CD4-positive, alpha-beta memory T cell (primary cell): ENCODE measurements at regions of chr9 and their contacts with region 1.

Region 1: DNA sequence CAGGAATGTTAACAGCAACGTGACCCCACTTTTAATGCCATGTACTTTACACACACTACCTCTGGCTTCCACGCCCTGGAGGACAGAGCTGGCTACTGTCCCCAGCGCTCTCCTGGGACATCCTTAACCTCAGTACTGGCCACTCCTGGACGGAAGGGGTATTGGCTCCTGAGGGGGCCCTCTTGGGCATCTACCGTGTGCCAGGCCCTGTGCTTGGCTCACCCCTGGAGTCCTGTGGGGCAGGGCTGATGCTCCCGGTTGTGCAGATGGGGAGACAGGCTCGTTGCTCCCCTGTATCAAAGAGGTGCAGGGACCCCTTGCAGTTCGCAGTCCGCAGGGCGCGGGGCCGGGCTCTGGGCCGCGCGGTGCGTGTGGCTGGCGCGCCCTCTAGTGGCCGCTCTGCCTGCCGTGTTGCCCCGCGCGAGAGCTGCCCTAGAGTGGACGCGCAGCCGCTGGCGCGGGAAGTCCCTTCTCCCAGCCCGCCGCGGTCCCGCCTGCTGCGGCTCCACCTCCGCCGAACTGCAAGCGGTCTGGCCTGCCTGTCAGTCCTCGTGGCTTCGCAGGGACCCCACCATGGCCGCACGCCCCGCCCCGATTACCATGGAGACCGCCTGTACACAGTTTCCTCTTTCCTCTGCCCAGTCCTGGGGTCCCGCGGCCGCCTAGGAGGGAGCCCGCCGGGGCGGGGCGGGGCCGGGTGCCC is at the start of gene WDR38:
- DNase-seq: peak; percentile 78 to 91 (median 80)
- H3K4me3 ChIP-seq: peak within 1 kb of the TSS; percentile 3 to 58
- H3K4me3 Mint-ChIP-seq: peak within 1 kb of the TSS; percentile 55 to 79 (median 72)
- H3K27ac ChIP-seq: peak within 1 kb of the TSS; percentile 69
- H3K27ac Mint-ChIP-seq: peak within 1 kb of the TSS; percentile 57 to 95 (median 83)
- H3K4me1 ChIP-seq: peaks cover 11% of the 10 kb centered on the region
- H3K4me1 Mint-ChIP-seq: peaks cover 5 to 19% (median 6%) of the 10 kb centered on the region in 4 donors
- H3K27me3 ChIP-seq: no peaks in the 10 kb centered on the region
- H3K27me3 Mint-ChIP-seq: peaks cover 0 to 1% of the 10 kb centered on the region in 2 donors
- total RNA-seq, gene WDR38: not detected

Region 2: DNA sequence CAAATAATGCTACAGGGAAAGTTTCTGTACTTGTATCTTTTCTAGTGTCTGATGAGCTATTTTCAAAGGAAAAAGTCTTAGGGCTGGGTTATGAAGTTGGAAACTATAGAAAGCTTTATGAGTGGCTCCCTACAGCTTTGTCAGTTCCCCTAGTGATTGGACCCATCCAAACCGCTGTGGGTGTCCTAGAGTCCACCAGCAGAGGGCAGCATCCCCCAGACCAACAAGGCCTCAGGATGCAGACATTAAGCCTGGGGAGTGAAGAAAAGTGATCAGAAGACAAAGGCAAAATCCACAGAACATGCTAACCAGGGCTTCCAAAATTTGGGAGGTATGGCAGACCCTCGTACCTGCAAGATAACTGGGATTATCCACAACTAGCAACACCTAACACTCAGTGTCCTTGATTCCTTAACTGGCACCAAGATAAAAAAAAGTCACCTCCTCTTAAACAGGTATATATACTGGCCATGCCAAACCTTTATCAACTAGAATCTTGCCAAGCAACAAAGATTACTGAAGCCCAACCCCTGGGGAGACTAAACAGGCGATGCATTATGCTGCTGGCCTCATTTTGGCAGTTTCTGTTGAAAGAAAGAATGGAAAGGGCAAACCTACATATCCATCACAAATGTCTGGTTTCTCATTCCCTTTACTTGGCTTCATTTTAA is 235.4 kb before region 1 on chr9:
- CTCF ChIA-PET with region 1: no interaction called
- POLR2A ChIA-PET with region 1: no interaction called
- intact Hi-C with region 1: loop called (anchors 2 kb)
- DNase-seq: peak; percentile 34 to 52 (median 43)
- H3K4me3 ChIP-seq: no peak overlapping the region
- H3K4me3 Mint-ChIP-seq: no peak overlapping the region
- H3K27ac ChIP-seq: no peak overlapping the region
- H3K27ac Mint-ChIP-seq: no peak overlapping the region
- H3K4me1 ChIP-seq: no peaks in the 10 kb centered on the region
- H3K4me1 Mint-ChIP-seq: no peaks in the 10 kb centered on the region
- H3K27me3 ChIP-seq: no peaks in the 10 kb centered on the region
- H3K27me3 Mint-ChIP-seq: peaks cover 4 to 13% of the 10 kb centered on the region in 2 donors

Region 3: GRCh38 chr9:124708633-124709291 is 144.2 kb before region 1 on chr9:
- CTCF ChIA-PET with region 1: interaction called, 3 read pairs
- POLR2A ChIA-PET with region 1: no interaction called
- intact Hi-C with region 1: loop called (anchors 5 kb)
- DNase-seq: no peak
- H3K4me3 ChIP-seq: no peak overlapping the region
- H3K4me3 Mint-ChIP-seq: no peak overlapping the region
- H3K27ac ChIP-seq: no peak overlapping the region
- H3K27ac Mint-ChIP-seq: no peak overlapping the region
- H3K4me1 ChIP-seq: no peaks in the 10 kb centered on the region
- H3K4me1 Mint-ChIP-seq: peaks cover 0 to 2% (median 0%) of the 10 kb centered on the region in 4 donors
- H3K27me3 ChIP-seq: peaks cover 4% of the 10 kb centered on the region
- H3K27me3 Mint-ChIP-seq: peaks cover 14 to 18% of the 10 kb centered on the region in 2 donors

Region 4: GRCh38 chr9:124839612-124840299 is 13.2 kb before region 1 on chr9:
- CTCF ChIA-PET with region 1: interaction called, 14 read pairs
- POLR2A ChIA-PET with region 1: no interaction called
- intact Hi-C with region 1: no loop called
- DNase-seq: no peak
- H3K4me3 ChIP-seq: no peak overlapping the region
- H3K4me3 Mint-ChIP-seq: peak overlapping the region in 1 of 8 donors; percentile 1
- H3K27ac ChIP-seq: no peak overlapping the region
- H3K27ac Mint-ChIP-seq: no peak overlapping the region
- H3K4me1 ChIP-seq: no peaks in the 10 kb centered on the region
- H3K4me1 Mint-ChIP-seq: peaks cover 0 to 8% (median 0%) of the 10 kb centered on the region in 4 donors
- H3K27me3 ChIP-seq: peaks cover 4% of the 10 kb centered on the region
- H3K27me3 Mint-ChIP-seq: peaks cover 15 to 16% of the 10 kb centered on the region in 2 donors

Region 5: DNA sequence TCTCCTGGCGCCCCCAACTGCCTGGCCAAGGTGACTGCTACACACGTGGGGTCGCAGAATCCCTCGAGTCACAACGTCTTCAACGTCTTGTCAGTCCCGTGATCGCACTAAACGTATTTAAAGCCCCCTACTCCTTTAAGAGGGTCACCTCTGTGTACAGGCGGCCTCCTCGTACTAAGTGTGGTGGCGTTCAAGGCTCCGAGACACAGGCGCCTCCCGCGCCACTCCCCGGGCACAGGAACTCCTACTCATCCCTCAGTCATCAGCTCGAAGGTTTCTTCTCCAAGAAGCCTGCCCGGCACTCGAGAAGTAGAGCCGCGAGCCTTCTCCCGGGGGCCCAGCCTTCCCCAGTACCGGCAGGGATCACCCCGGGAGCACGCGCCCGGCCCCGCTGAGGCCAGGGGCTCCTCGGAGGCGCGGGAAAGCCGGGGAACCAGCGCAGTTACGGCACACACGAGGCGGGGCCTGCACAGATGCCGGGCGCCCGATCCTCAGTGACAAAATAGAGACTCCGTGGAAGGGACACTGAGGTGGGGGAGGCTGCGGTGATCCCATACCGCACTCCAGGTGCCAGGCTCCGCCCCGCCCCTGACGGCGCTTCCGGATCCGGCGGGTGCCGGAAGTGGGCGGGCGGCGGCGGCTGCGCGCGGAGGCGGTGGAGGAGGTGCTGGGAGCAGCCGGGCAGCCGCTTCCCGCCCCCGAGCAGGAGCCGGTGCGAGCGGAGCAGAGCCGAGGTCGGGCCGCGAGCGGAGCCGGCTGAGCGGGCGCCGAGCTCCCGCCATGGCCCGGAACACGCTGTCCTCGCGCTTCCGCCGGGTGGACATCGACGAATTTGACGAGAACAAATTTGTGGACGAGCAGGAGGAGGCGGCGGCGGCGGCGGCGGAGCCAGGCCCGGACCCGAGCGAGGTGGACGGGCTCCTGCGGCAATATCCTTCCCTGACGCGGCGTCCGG is 15.8 kb after region 1 on chr9:
- CTCF ChIA-PET with region 1: interaction called, 56 read pairs
- POLR2A ChIA-PET with region 1: interaction called, 74 read pairs
- intact Hi-C with region 1: no loop called
- DNase-seq: peak; percentile 90 to 94 (median 92)
- H3K4me3 ChIP-seq: peak overlapping the region; percentile 58 to 85
- H3K4me3 Mint-ChIP-seq: peak overlapping the region; percentile 90 to 96 (median 93)
- H3K27ac ChIP-seq: peak overlapping the region; percentile 91
- H3K27ac Mint-ChIP-seq: peak overlapping the region; percentile 94 to 98 (median 95)
- H3K4me1 ChIP-seq: peaks cover 47% of the 10 kb centered on the region
- H3K4me1 Mint-ChIP-seq: peaks cover 29 to 64% (median 43%) of the 10 kb centered on the region in 4 donors
- H3K27me3 ChIP-seq: no peaks in the 10 kb centered on the region
- H3K27me3 Mint-ChIP-seq: no peaks in the 10 kb centered on the region

Region 6: GRCh38 chr9:124879226-124879625 is 26.2 kb after region 1 on chr9:
- CTCF ChIA-PET with region 1: interaction called, 56 read pairs
- POLR2A ChIA-PET with region 1: interaction called, 74 read pairs
- intact Hi-C with region 1: no loop called
- DNase-seq: no peak
- H3K4me3 ChIP-seq: no peak overlapping the region
- H3K4me3 Mint-ChIP-seq: no peak overlapping the region
- H3K27ac ChIP-seq: no peak overlapping the region
- H3K27ac Mint-ChIP-seq: peak overlapping the region in 4 of 7 donors; percentile 56 to 62 (median 60)
- H3K4me1 ChIP-seq: peaks cover 10% of the 10 kb centered on the region
- H3K4me1 Mint-ChIP-seq: peaks cover 6 to 15% (median 8%) of the 10 kb centered on the region in 4 donors
- H3K27me3 ChIP-seq: no peaks in the 10 kb centered on the region
- H3K27me3 Mint-ChIP-seq: no peaks in the 10 kb centered on the region

Region 7: DNA sequence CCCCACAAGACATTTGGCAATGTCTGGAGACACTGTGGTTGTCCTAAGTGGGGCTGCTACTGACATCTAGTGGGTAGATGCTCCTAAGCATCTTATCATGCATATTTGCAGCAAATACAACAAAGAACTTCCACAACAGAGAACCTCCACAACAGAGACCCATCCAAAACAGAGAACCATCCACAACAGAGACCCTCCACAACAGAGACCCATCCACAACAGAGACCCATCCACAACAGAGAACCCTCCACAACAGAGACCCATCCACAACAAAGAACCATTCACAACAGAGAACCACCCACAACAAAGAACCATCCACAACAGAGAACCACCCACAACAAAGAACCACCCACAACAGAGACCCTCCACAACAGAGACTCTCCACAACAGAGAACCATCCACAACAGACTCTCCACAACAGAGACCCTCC is 41.8 kb after region 1 on chr9:
- CTCF ChIA-PET with region 1: interaction called, 27 read pairs
- POLR2A ChIA-PET with region 1: no interaction called
- intact Hi-C with region 1: loop called (anchors 1 kb)
- DNase-seq: peak; percentile 51 to 61 (median 58)
- H3K4me3 ChIP-seq: no peak overlapping the region
- H3K4me3 Mint-ChIP-seq: peak overlapping the region in 3 of 8 donors; percentile 12 to 69 (median 25)
- H3K27ac ChIP-seq: no peak overlapping the region
- H3K27ac Mint-ChIP-seq: peak overlapping the region; percentile 40 to 90 (median 72)
- H3K4me1 ChIP-seq: no peaks in the 10 kb centered on the region
- H3K4me1 Mint-ChIP-seq: peaks cover 7 to 16% (median 13%) of the 10 kb centered on the region in 4 donors
- H3K27me3 ChIP-seq: no peaks in the 10 kb centered on the region
- H3K27me3 Mint-ChIP-seq: no peaks in the 10 kb centered on the region

Region 8: DNA sequence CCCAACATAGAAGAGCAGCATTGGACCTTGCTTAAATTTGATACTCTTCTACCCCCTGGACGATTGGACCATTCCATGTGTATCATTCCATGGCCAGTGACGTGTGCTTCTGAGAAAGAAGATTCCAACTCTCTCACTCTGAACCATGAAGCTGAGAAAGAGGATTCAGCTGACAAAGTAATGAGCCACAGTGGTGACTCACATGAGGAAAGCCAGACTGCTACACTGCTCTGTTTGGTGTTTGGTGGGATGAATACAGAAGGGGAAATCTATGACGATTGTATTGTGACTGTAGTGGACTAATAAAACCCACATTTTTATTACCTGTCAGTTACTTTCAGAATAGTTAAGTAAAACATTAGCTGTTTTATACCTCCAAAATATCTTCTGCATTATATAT is 380.7 kb after region 1 on chr9:
- CTCF ChIA-PET with region 1: no interaction called
- POLR2A ChIA-PET with region 1: no interaction called
- intact Hi-C with region 1: no loop called
- DNase-seq: no peak
- H3K4me3 ChIP-seq: no peak overlapping the region
- H3K4me3 Mint-ChIP-seq: no peak overlapping the region
- H3K27ac ChIP-seq: no peak overlapping the region
- H3K27ac Mint-ChIP-seq: peak overlapping the region in 2 of 7 donors; percentile 17 to 75
- H3K4me1 ChIP-seq: peaks cover 39% of the 10 kb centered on the region
- H3K4me1 Mint-ChIP-seq: peaks cover 24 to 45% (median 30%) of the 10 kb centered on the region in 4 donors
- H3K27me3 ChIP-seq: no peaks in the 10 kb centered on the region
- H3K27me3 Mint-ChIP-seq: no peaks in the 10 kb centered on the region